ENCODE measurements at regions of chr15 and their contacts with region 1.

Region 1: GRCh38 chr15:97909291-97909891 is 51.1 kb upstream of the ARRDC4 start:
- DNase-seq: peak; percentile 76
- ATAC-seq: peak; percentile 95

Region 2: DNA sequence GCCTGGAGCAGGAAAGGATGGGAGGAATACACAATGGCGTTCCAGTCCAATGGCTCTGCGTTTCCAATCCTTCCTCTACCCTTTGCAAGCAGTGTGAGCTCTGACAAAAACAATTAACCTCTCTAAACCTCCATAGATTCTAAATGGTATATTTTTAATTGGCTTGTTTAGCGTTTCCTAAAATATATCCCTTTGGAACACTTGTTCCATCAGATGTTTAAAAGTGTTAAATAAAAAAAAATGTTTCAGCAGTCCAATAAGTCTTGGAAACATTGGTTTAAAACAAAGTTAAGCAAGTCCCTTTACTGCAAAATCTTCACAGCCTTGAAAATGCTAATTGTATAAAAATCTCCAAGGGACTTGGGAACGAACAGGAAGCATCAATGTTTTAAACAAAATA is 381.2 kb before region 1 on chr15:
- intact Hi-C with region 1: no loop called
- DNase-seq: no peak
- ATAC-seq: no peak

Region 3: DNA sequence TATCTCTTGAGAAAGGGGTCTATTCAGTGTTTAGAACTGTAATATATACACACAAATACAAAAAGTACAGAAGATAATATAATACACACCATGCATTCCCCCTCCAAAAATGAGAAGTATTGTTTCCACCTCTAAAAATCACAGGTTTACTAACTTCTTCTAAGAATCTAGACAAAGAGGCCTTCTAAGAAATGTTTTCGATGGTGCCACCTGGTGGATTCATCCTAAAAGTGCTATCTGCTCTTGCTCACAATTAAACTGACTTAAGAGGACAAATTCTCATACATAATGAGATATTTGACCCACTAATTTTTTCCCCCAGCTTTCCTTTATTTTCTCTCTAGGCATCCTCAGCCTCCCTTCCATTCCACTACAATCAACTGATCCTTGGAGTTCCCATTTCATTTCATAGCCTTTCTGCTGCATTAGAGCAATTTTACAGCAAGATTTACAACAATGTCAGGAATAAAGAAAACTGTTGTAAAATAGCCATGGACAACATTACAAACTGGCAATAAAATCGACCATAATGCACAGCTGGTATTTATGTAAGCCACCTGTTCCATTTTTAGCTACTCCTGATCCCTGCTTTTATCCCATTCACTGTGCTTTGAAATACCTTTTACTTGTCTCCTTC is 175.7 kb after region 1 on chr15:
- intact Hi-C with region 1: loop called (anchors 5 kb)
- DNase-seq: no peak
- ATAC-seq: no peak

Region 4: GRCh38 chr15:98177924-98178592 is 268.7 kb after region 1 on chr15:
- intact Hi-C with region 1: loop called (anchors 10 kb)
- DNase-seq: no peak
- ATAC-seq: peak; percentile 73

Region 5: DNA sequence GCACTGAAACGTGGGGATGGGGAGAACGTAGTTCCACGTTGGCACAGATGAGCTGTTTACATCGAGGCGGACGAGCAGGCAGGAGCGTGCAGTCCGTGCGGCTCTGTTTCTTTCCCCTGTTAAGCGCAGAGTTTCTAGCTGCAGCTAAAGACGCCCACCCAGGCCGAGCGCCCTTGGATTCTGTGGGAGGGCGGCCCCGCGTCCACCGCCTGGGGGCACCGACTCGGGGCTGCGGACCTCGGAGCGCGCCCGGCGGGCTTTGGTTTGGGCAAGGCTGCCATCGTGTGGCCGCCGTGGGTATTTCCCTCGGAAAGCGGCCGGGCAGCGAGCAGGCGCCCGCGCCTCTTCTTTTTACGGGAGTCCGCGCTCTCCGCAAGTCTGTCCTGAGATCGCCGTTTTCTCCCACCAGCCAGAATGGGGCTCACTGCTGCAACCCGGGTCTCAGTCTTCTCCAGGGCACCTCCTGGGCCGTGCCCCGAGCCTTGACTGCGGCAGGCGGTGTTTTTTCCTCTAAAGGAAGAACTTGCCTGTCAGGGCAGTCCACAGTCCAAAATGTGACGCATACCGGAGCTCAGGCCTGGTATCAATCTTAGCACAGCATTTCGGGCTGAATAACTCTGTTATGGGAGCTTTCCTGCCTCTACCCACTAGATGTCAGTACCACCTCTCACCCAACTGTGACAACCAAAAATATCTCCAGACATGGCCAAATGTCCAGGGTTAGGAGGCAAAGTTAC is 519.0 kb after region 1 on chr15:
- intact Hi-C with region 1: loop called (anchors 10 kb)
- DNase-seq: peak; percentile 82
- ATAC-seq: peak; percentile 95